Activated B cell treated with CpG ODN at 0.5 μM for 24 hours (primary cell): ENCODE measurements at regions of chr12 and their contacts with region 1.

Region 1: GRCh38 chr12:122265931-122266771 is at the start of gene VPS33A:
- DNase-seq: peak; percentile 88
- ATAC-seq: peak; percentile 84
- H3K4me3 Mint-ChIP-seq: peak within 1 kb of the TSS; percentile 97
- H3K27ac Mint-ChIP-seq: peak within 1 kb of the TSS; percentile 98
- H3K4me1 Mint-ChIP-seq: peaks cover 21% of the 10 kb centered on the region
- H3K27me3 Mint-ChIP-seq: peaks cover 2% of the 10 kb centered on the region
- CTCF ChIP-seq: no peak
- total RNA-seq, gene VPS33A: 29.6 and 33.2 TPM in 2 replicates

Region 2: GRCh38 chr12:122166422-122167349 is 99.5 kb before region 1 on chr12:
- CTCF ChIA-PET with region 1: no interaction called
- POLR2A ChIA-PET with region 1: no interaction called
- intact Hi-C with region 1: no loop called
- DNase-seq: no peak
- ATAC-seq: peak; percentile 14
- H3K4me3 Mint-ChIP-seq: no peak overlapping the region
- H3K27ac Mint-ChIP-seq: no peak overlapping the region
- H3K4me1 Mint-ChIP-seq: no peaks in the 10 kb centered on the region
- H3K27me3 Mint-ChIP-seq: peaks cover 14% of the 10 kb centered on the region
- CTCF ChIP-seq: no peak

Region 3: GRCh38 chr12:122225683-122226407 is 40.3 kb before region 1 on chr12 and contains the start of gene DIABLO:
- CTCF ChIA-PET with region 1: no interaction called
- POLR2A ChIA-PET with region 1: interaction called, 32 read pairs
- intact Hi-C with region 1: loop called (anchors 1 kb)
- DNase-seq: peak; percentile 99
- ATAC-seq: peak; percentile 93
- H3K4me3 Mint-ChIP-seq: peak within 1 kb of the TSS; percentile 89
- H3K27ac Mint-ChIP-seq: peak within 1 kb of the TSS; percentile 89
- H3K4me1 Mint-ChIP-seq: peaks cover 26% of the 10 kb centered on the region
- H3K27me3 Mint-ChIP-seq: no peaks in the 10 kb centered on the region
- CTCF ChIP-seq: no peak
- total RNA-seq, gene DIABLO: 39.8 and 51.3 TPM in 2 replicates

Region 4: GRCh38 chr12:122244565-122245371 is 21.4 kb before region 1 on chr12:
- CTCF ChIA-PET with region 1: no interaction called
- POLR2A ChIA-PET with region 1: interaction called, 13 read pairs
- intact Hi-C with region 1: no loop called
- DNase-seq: no peak
- ATAC-seq: no peak
- H3K4me3 Mint-ChIP-seq: no peak overlapping the region
- H3K27ac Mint-ChIP-seq: no peak overlapping the region
- H3K4me1 Mint-ChIP-seq: no peaks in the 10 kb centered on the region
- H3K27me3 Mint-ChIP-seq: no peaks in the 10 kb centered on the region
- CTCF ChIP-seq: no peak

Region 5: GRCh38 chr12:122282066-122282465 is 15.9 kb after region 1 on chr12:
- CTCF ChIA-PET with region 1: no interaction called
- POLR2A ChIA-PET with region 1: interaction called, 13 read pairs
- intact Hi-C with region 1: no loop called
- DNase-seq: no peak
- ATAC-seq: no peak
- H3K4me3 Mint-ChIP-seq: no peak overlapping the region
- H3K27ac Mint-ChIP-seq: no peak overlapping the region
- H3K4me1 Mint-ChIP-seq: no peaks in the 10 kb centered on the region
- H3K27me3 Mint-ChIP-seq: no peaks in the 10 kb centered on the region
- CTCF ChIP-seq: no peak

Region 6: GRCh38 chr12:122421821-122422729 is 155.9 kb after region 1 on chr12 and contains the start of gene CLIP1:
- CTCF ChIA-PET with region 1: no interaction called
- POLR2A ChIA-PET with region 1: no interaction called
- intact Hi-C with region 1: loop called (anchors 5 kb)
- DNase-seq: peak; percentile 71
- ATAC-seq: peak; percentile 67
- H3K4me3 Mint-ChIP-seq: peak within 1 kb of the TSS; percentile 91
- H3K27ac Mint-ChIP-seq: peak within 1 kb of the TSS; percentile 90
- H3K4me1 Mint-ChIP-seq: peaks cover 59% of the 10 kb centered on the region
- H3K27me3 Mint-ChIP-seq: no peaks in the 10 kb centered on the region
- CTCF ChIP-seq: no peak
- total RNA-seq, gene CLIP1: 58.6 and 63.2 TPM in 2 replicates

Region 7: GRCh38 chr12:122752464-122753318 is 486.5 kb after region 1 on chr12 and contains the start of gene DENR:
- CTCF ChIA-PET with region 1: no interaction called
- POLR2A ChIA-PET with region 1: no interaction called
- intact Hi-C with region 1: loop called (anchors 2 kb)
- DNase-seq: peak; percentile 99
- ATAC-seq: peak; percentile 92
- H3K4me3 Mint-ChIP-seq: peak within 1 kb of the TSS; percentile 91
- H3K27ac Mint-ChIP-seq: peak within 1 kb of the TSS; percentile 92
- H3K4me1 Mint-ChIP-seq: peaks cover 46% of the 10 kb centered on the region
- H3K27me3 Mint-ChIP-seq: no peaks in the 10 kb centered on the region
- CTCF ChIP-seq: no peak
- total RNA-seq, gene DENR: 50.5 and 53.3 TPM in 2 replicates

Region 8: DNA sequence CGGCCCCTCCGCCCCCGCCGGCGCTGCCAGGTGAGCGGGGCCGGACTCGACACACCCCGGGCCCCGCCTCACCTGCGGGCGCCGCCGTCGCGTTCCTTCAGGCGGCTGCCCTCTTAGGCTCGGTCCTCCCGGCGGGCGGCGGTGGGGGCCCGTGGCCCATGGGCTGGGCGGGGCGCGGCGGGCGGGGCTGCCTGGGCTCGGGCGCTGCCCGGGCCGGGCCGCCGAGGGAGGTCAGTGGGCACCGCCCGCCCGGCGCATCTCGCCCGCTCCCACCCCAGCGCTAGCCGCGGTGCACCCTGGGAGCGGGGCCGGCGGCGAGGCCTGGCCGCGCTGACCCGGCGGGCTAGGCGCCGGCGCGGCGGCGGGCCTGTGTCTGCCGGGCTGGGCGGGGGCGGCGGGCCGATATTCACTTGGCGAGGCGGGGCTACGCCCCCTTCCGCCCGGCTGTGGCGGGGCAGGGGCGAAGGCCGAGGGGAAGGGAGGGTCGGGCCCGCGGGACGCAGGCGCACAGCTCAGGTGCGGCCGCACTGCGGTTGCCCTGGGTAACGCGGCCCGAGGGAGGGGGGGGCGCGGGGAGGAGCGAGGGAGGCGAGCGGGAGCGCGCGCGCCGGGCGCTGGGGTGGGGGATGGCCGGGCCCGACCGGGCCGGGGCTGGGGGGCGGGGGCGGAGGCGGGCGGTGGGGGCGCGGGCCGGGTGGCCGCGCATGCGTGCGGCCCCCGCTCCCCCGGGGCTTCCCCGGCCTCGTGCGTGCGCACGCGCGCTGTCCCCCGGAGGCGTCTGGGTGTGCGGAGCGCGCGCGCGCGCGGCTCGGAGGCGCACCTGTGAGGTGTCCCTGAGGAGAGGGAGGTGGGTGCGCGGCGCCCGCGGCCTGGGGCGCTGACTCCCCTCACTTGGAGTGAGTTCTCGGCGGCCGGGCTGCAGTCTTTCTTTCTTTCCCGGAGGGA is 1706.6 kb after region 1 on chr12 and contains the starts of genes CCDC92 and ZNF664:
- CTCF ChIA-PET with region 1: no interaction called
- POLR2A ChIA-PET with region 1: no interaction called
- intact Hi-C with region 1: loop called (anchors 10 kb)
- DNase-seq: peak; percentile 98
- ATAC-seq: peak; percentile 84
- H3K4me3 Mint-ChIP-seq: peak within 1 kb of the TSS; percentile 92
- H3K27ac Mint-ChIP-seq: peak within 1 kb of the TSS; percentile 88
- H3K4me1 Mint-ChIP-seq: peaks cover 15% of the 10 kb centered on the region
- H3K27me3 Mint-ChIP-seq: no peaks in the 10 kb centered on the region
- CTCF ChIP-seq: no peak
- total RNA-seq, gene CCDC92: 21.5 and 23.7 TPM in 2 replicates
- total RNA-seq, gene ZNF664: 35.6 and 40.7 TPM in 2 replicates